Activated CD4-positive, alpha-beta T cell treated with anti-CD3 and anti-CD28 coated beads for 36 hours (primary cell): ENCODE measurements at regions of chr2 and their contacts with region 1.

Region 1: GRCh38 chr2:161136696-161137324 is 23.4 kb upstream of the TANK start:
- DNase-seq: peak; percentile 30
- ATAC-seq: peak; percentile 82
- H3K4me3 Mint-ChIP-seq: peak overlapping the region; percentile 83
- H3K27ac Mint-ChIP-seq: peak overlapping the region; percentile 98
- H3K4me1 Mint-ChIP-seq: peaks cover 52% of the 10 kb centered on the region
- H3K27me3 Mint-ChIP-seq: no peaks in the 10 kb centered on the region

Region 2: DNA sequence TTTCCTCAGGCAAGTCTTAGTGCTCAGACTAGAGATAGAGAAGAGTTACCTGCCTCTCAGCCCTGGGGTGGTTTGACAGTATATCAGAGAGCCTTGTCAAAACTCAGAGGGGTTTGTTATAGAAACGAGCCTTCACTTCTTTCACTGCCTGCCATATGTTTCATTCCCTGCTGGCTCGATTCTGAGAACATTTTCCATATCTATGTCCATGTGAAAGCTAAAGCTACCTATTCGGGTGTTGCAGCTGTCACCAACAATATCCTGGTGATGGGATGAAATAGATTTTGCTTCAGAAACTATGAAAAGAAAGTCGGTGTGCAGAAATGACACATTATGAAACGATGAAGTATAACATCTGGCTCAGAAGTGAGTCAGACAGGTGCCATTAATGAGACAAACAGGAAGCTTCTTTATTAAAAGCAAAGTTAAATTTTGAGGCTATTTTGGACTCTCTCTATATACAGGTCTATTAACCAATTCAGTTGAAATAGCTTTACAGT is 32.7 kb before region 1 on chr2:
- CTCF ChIA-PET with region 1: interaction called, 5 read pairs
- POLR2A ChIA-PET with region 1: no interaction called
- intact Hi-C with region 1: loop called (anchors 2 to 5 kb)
- DNase-seq: peak; percentile 10
- ATAC-seq: peak; percentile 84
- H3K4me3 Mint-ChIP-seq: no peak overlapping the region
- H3K27ac Mint-ChIP-seq: no peak overlapping the region
- H3K4me1 Mint-ChIP-seq: peaks cover 32% of the 10 kb centered on the region
- H3K27me3 Mint-ChIP-seq: no peaks in the 10 kb centered on the region

Region 3: GRCh38 chr2:161122772-161123530 is 13.9 kb before region 1 on chr2:
- CTCF ChIA-PET with region 1: interaction called, 8 read pairs
- POLR2A ChIA-PET with region 1: interaction called, 3 read pairs
- intact Hi-C with region 1: loop called in 1 of 2 experiments (anchors 1 kb)
- DNase-seq: peak; percentile 61
- ATAC-seq: peak; percentile 95
- H3K4me3 Mint-ChIP-seq: no peak overlapping the region
- H3K27ac Mint-ChIP-seq: no peak overlapping the region
- H3K4me1 Mint-ChIP-seq: peaks cover 24% of the 10 kb centered on the region
- H3K27me3 Mint-ChIP-seq: no peaks in the 10 kb centered on the region

Region 4: GRCh38 chr2:161166538-161167409 is 30.0 kb after region 1 on chr2:
- CTCF ChIA-PET with region 1: interaction called, 3 read pairs
- POLR2A ChIA-PET with region 1: interaction called, 4 read pairs
- intact Hi-C with region 1: loop called (anchors 1 to 5 kb)
- DNase-seq: peak; percentile 83
- ATAC-seq: peak; percentile 89
- H3K4me3 Mint-ChIP-seq: peak overlapping the region; percentile 54
- H3K27ac Mint-ChIP-seq: peak overlapping the region; percentile 85
- H3K4me1 Mint-ChIP-seq: peaks cover 91% of the 10 kb centered on the region
- H3K27me3 Mint-ChIP-seq: no peaks in the 10 kb centered on the region

Region 5: GRCh38 chr2:161172901-161173540 is 36.2 kb after region 1 on chr2:
- CTCF ChIA-PET with region 1: interaction called, 3 read pairs
- POLR2A ChIA-PET with region 1: interaction called, 3 read pairs
- intact Hi-C with region 1: loop called in 1 of 2 experiments (anchors 5 kb)
- DNase-seq: no peak
- ATAC-seq: peak; percentile 87
- H3K4me3 Mint-ChIP-seq: no peak overlapping the region
- H3K27ac Mint-ChIP-seq: peak overlapping the region; percentile 49
- H3K4me1 Mint-ChIP-seq: peaks cover 71% of the 10 kb centered on the region
- H3K27me3 Mint-ChIP-seq: no peaks in the 10 kb centered on the region

Region 6: DNA sequence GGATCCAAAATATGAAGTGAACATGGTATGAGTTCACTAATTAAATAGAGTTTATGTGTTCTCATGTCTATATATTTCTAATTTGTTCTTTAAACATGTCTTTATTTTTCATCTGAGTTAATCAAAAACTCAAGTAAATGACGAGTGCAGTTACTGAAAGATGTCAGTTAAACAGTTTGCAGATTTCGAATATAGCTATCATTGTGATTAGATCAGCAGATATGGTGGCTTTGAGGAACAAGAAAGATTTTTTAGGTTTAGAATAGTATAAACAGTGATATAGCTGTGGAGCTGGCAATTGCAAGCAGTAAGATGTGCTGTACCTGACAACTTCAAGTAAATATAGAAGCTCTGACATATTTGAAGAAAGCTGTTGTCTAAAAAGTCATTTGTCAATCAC is 73.1 kb after region 1 on chr2:
- CTCF ChIA-PET with region 1: no interaction called
- POLR2A ChIA-PET with region 1: no interaction called
- intact Hi-C with region 1: no loop called
- DNase-seq: no peak
- ATAC-seq: no peak
- H3K4me3 Mint-ChIP-seq: no peak overlapping the region
- H3K27ac Mint-ChIP-seq: no peak overlapping the region
- H3K4me1 Mint-ChIP-seq: peaks cover 12% of the 10 kb centered on the region
- H3K27me3 Mint-ChIP-seq: no peaks in the 10 kb centered on the region

Region 7: DNA sequence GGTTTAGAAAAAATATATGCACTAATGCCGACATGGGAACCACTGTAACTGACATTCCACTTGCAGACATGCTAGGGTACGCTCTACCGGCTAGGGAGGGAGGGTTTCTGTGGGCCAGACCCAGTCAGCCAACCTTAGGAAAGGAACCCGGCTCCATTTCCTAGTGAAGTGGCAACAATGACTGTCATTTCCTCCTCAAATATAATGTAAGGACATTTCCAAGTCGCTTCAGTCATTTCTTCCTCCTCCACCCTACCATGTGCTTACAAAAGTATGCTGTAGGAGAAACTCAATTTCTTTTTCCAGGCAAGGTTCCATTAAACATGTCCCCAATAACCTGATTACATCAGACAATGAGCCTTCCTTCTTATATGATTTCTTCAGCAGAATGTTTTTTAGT is 107.1 kb after region 1 on chr2:
- CTCF ChIA-PET with region 1: no interaction called
- POLR2A ChIA-PET with region 1: no interaction called
- intact Hi-C with region 1: loop called in 1 of 2 experiments (anchors 1 kb)
- DNase-seq: peak; percentile 53
- ATAC-seq: peak; percentile 20
- H3K4me3 Mint-ChIP-seq: peak overlapping the region; percentile 91
- H3K27ac Mint-ChIP-seq: peak overlapping the region; percentile 98
- H3K4me1 Mint-ChIP-seq: peaks cover 56% of the 10 kb centered on the region
- H3K27me3 Mint-ChIP-seq: no peaks in the 10 kb centered on the region

Region 8: DNA sequence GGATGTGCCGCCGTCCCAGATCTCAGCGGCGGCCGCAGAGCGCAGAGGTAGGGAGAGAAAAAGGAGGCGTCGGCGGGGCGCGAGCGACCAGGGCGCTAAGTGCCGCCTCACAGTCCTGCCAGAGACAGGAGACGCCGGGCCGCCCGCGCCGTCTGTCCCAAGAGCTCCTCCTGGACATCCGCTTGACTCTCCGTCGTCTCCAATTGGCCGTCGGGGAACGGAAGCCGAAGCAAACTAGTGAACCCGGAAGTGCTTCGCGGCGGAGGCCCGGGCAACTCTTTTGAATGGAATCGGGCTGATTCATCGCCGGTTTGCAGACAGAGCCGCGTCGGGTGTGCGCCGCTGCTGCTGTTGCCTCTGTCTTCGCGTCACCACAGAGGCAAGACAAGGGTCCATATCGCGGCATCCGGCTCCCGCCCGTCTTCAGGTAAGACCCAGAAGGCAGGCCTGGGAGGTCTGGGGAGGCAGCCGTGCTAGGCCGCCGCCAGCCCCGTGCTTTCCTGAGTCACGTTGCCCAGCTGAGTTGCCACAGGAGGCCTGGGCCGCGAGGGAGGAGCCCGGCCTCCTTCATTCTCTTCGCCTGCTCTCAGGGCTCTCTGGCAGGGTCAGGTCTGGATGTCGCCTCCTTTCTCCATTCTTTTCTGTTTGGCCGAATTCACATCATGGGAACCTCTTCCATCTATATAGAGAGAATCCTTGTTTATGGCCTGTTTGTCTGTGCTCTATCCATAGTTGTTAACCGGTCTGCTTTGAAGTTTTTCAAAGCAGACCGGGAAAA is 171.6 kb after region 1 on chr2 and contains the start of gene PSMD14:
- CTCF ChIA-PET with region 1: no interaction called
- POLR2A ChIA-PET with region 1: no interaction called
- intact Hi-C with region 1: loop called in 1 of 2 experiments (anchors 1 kb)
- DNase-seq: peak; percentile 96
- ATAC-seq: peak; percentile 91
- H3K4me3 Mint-ChIP-seq: peak within 1 kb of the TSS; percentile 87
- H3K27ac Mint-ChIP-seq: peak within 1 kb of the TSS; percentile 93
- H3K4me1 Mint-ChIP-seq: peaks cover 28% of the 10 kb centered on the region
- H3K27me3 Mint-ChIP-seq: no peaks in the 10 kb centered on the region
- total RNA-seq, gene PSMD14: 69.5 to 85.7 TPM